ENCODE measurements at regions of chr1 and their contacts with region 1.

Region 1: GRCh38 chr1:53025034-53025768 is 36.8 kb upstream of the PODN start:
- DNase-seq: no peak
- H3K4me3 ChIP-seq: no peak overlapping the region
- H3K27ac ChIP-seq: no peak overlapping the region
- H3K4me1 ChIP-seq: no peaks in the 10 kb centered on the region
- H3K27me3 ChIP-seq: no peaks in the 10 kb centered on the region
- CTCF ChIP-seq: no peak

Region 2: GRCh38 chr1:53014791-53015507 is 10.3 kb before region 1 on chr1:
- CTCF ChIA-PET with region 1: no interaction called
- dilution Hi-C with region 1: no loop called
- in situ Hi-C with region 1: no loop called
- intact Hi-C with region 1: loop called (anchors 2 kb)
- DNase-seq: peak; percentile 90
- H3K4me3 ChIP-seq: peak overlapping the region; percentile 58 to 91 (median 86)
- H3K27ac ChIP-seq: peak overlapping the region; percentile 71
- H3K4me1 ChIP-seq: no peaks in the 10 kb centered on the region
- H3K27me3 ChIP-seq: no peaks in the 10 kb centered on the region
- CTCF ChIP-seq: no peak

Measured in mammary epithelial cell (primary cell).